Common myeloid progenitor, CD34-positive (primary cell): ENCODE measurements at regions of chr15 and their contacts with region 1.

Region 1: DNA sequence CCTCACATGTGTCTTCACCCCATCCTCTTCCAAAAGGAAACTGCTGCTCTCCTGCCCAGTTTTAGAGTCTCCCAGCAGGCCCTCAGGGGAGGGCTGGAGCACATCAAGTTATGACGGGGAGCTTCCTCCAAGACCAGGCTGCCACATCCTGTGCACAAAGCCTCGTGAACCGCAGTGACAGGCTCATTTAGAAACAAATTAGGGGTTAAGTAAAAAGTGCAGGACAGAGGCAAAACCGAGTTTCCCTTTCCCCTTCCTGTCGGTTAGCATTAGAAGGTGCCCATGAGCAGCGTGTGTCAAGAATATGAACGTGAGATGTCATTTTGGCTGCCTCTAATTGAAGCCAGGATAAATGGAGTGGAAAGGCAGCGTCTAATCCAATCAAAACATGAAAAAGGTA is 199.7 kb downstream of the ARRDC4 start:
- DNase-seq: peak; percentile 90 to 96 (median 94)
- H3K4me3 ChIP-seq: peak overlapping the region in 2 of 7 experiments; percentile 0 to 32
- H3K27ac ChIP-seq: no peak overlapping the region
- H3K4me1 ChIP-seq: peaks cover 2 to 36% (median 34%) of the 10 kb centered on the region in 4 experiments
- H3K27me3 ChIP-seq: no peaks in the 10 kb centered on the region

Region 2: DNA sequence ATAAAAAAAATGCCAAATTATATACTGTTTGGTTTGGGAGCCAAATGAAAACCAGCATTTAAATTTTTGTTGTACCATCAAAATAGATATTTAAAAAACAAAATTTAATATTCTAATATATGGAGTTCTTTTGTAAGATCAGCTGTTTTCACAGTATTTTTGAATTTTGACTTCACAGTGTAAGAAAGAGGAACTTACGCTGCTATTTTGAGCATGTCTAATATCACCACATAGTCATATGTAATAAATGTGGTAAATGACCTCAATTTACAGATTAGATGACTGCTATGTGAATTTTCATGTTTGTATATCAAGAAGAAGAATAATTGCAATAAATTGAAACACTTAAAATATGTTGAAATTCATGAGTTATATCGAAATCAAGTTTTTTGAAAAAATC is 10.2 kb before region 1 on chr15:
- CTCF ChIA-PET with region 1: interaction called, 8 read pairs
- POLR2A ChIA-PET with region 1: interaction called, 13 read pairs
- DNase-seq: peak; percentile 55 to 91 (median 84)
- H3K4me3 ChIP-seq: no peak overlapping the region
- H3K27ac ChIP-seq: peak overlapping the region; percentile 35 to 73
- H3K4me1 ChIP-seq: peaks cover 17 to 40% (median 26%) of the 10 kb centered on the region in 4 experiments
- H3K27me3 ChIP-seq: no peaks in the 10 kb centered on the region

Region 3: GRCh38 chr15:98257290-98257689 is 97.1 kb after region 1 on chr15:
- CTCF ChIA-PET with region 1: no interaction called
- POLR2A ChIA-PET with region 1: no interaction called
- DNase-seq: no peak
- H3K4me3 ChIP-seq: no peak overlapping the region
- H3K27ac ChIP-seq: no peak overlapping the region
- H3K4me1 ChIP-seq: no peaks in the 10 kb centered on the region
- H3K27me3 ChIP-seq: peaks cover 0 to 4% (median 0%) of the 10 kb centered on the region in 5 experiments